Endothelial cell of umbilical vein (primary cell): ENCODE measurements at regions of chr20 and their contacts with region 1.

Region 1: GRCh38 chr20:20096421-20096820 is 44.1 kb downstream of the CFAP61 start:
- DNase-seq: no peak
- H3K4me3 ChIP-seq: no peak overlapping the region
- H3K27ac ChIP-seq: no peak overlapping the region
- H3K4me1 ChIP-seq: no peaks in the 10 kb centered on the region
- H3K27me3 ChIP-seq: peaks cover 0 to 2% of the 10 kb centered on the region in 2 experiments
- CTCF ChIP-seq: no peak
- POLR2A ChIP-seq: no peak

Region 2: DNA sequence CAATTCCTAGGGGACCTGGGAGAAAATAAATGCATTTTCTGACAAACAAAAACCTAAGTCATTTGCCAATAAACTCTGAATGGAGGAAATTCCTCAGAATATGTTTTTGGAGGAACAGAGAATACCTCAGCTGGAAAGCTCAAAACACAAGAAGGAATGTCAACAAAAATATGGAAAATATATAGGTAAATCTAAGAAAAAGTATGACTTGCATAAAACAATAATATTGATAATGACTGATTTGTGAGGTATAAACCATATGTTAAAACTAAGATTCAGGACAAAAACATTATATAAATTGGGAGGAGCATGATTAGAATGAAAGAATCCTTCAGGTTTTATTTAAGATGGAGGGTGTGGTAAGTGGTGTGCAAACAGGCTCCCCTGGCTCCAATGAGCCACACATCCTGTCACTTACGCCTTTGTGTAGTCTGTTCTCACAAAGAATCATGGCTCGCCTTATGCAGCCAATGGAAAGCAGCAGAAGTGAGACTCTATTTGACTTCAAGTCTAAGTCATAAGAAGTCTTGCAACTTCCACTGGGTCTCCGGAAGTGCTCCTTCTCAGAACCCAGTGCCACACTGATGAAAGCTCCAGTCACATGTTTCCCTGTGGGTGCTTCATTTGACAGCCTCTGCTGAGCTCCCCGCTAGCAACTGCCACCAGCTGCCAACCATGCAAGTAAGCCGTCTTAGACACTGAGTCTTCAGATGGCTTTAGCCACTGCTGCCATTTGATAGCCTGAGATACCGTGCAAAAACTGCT is 36.0 kb before region 1 on chr20:
- CTCF ChIA-PET with region 1: no interaction called
- POLR2A ChIA-PET with region 1: no interaction called
- dilution Hi-C with region 1: no loop called
- intact Hi-C with region 1: no loop called
- DNase-seq: no peak
- H3K4me3 ChIP-seq: no peak overlapping the region
- H3K27ac ChIP-seq: no peak overlapping the region
- H3K4me1 ChIP-seq: no peaks in the 10 kb centered on the region
- H3K27me3 ChIP-seq: peaks cover 8 to 41% of the 10 kb centered on the region in 2 experiments
- CTCF ChIP-seq: no peak
- POLR2A ChIP-seq: no peak

Region 3: GRCh38 chr20:20167698-20168097 is 71.3 kb after region 1 on chr20:
- CTCF ChIA-PET with region 1: no interaction called
- POLR2A ChIA-PET with region 1: no interaction called
- dilution Hi-C with region 1: no loop called
- intact Hi-C with region 1: loop called (anchors 10 kb)
- DNase-seq: no peak
- H3K4me3 ChIP-seq: no peak overlapping the region
- H3K27ac ChIP-seq: no peak overlapping the region
- H3K4me1 ChIP-seq: no peaks in the 10 kb centered on the region
- H3K27me3 ChIP-seq: no peaks in the 10 kb centered on the region
- CTCF ChIP-seq: no peak
- POLR2A ChIP-seq: no peak